Endothelial cell of umbilical vein (primary cell): ENCODE measurements at regions of chr17 and their contacts with region 1.

Region 1: DNA sequence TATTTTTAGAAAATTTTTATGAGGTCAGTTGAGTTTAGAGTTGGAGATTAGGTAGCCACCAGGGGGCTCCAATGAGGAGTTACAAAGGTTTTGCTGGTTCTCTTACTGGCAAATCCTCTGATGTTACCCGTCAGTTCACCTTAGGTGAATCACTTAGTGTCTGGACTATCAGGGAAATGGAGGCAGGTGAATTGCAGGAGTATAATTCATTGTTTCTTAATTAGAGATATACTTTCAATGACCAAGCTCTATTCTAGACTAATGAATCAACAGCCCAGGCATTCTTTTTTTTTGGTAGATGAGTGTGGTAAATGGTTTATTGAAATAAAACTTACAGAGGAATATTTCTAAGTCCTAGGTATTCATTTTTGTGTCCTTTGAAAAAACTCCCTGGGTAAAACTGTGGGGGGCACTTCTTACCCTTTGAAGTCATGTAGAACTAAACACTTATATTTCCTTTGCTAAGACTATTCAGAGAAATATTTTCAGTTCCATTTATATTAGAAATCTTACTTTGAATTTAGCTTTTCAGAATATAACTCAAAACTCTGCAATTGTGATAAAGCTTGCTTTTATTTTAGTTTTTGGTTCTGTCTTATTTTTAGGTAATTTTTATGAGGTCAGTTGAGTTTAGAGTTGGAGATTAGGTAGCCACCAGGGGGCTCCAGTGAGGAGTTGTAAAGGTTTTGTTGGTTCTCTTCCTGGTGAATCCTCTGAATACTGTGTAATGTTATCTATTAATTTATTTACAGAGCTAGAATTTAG is 17.7 kb downstream of the PSMD11 start:
- DNase-seq: peak; percentile 69
- H3K4me3 ChIP-seq: no peak overlapping the region
- H3K27ac ChIP-seq: no peak overlapping the region
- H3K4me1 ChIP-seq: no peaks in the 10 kb centered on the region
- H3K27me3 ChIP-seq: no peaks in the 10 kb centered on the region
- CTCF ChIP-seq: peak; percentile 59 to 67
- POLR2A ChIP-seq: no peak

Region 2: GRCh38 chr17:32523017-32523680 is 61.1 kb after region 1 on chr17:
- CTCF ChIA-PET with region 1: no interaction called
- POLR2A ChIA-PET with region 1: no interaction called
- dilution Hi-C with region 1: no loop called
- intact Hi-C with region 1: no loop called
- DNase-seq: no peak
- H3K4me3 ChIP-seq: no peak overlapping the region
- H3K27ac ChIP-seq: no peak overlapping the region
- H3K4me1 ChIP-seq: peaks cover 19% of the 10 kb centered on the region
- H3K27me3 ChIP-seq: no peaks in the 10 kb centered on the region
- CTCF ChIP-seq: no peak
- POLR2A ChIP-seq: no peak

Region 3: GRCh38 chr17:32769839-32770238 is 307.8 kb after region 1 on chr17:
- CTCF ChIA-PET with region 1: interaction called, 12 read pairs
- POLR2A ChIA-PET with region 1: no interaction called
- dilution Hi-C with region 1: no loop called
- intact Hi-C with region 1: no loop called
- DNase-seq: no peak
- H3K4me3 ChIP-seq: no peak overlapping the region
- H3K27ac ChIP-seq: no peak overlapping the region
- H3K4me1 ChIP-seq: peaks cover 24% of the 10 kb centered on the region
- H3K27me3 ChIP-seq: no peaks in the 10 kb centered on the region
- CTCF ChIP-seq: no peak
- POLR2A ChIP-seq: no peak